PC-3 (cell line): ENCODE measurements at regions of chr1 and their contacts with region 1.

Region 1: GRCh38 chr1:109984456-109985275 is at the start of gene AHCYL1:
- DNase-seq: peak; percentile 99
- ATAC-seq: peak; percentile 86
- H3K4me3 ChIP-seq: peak within 1 kb of the TSS; percentile 84
- H3K27ac ChIP-seq: peak within 1 kb of the TSS; percentile 43
- H3K4me1 ChIP-seq: peaks cover 58% of the 10 kb centered on the region
- H3K27me3 ChIP-seq: no peaks in the 10 kb centered on the region
- CTCF ChIP-seq: peak; percentile 94
- total RNA-seq, gene AHCYL1: 35.8 and 40.9 TPM in 2 replicates

Region 2: GRCh38 chr1:109643385-109644230 is 341.1 kb before region 1 on chr1:
- CTCF ChIA-PET with region 1: interaction called, 12 read pairs
- POLR2A ChIA-PET with region 1: no interaction called
- intact Hi-C with region 1: loop called (anchors 2 kb)
- DNase-seq: peak; percentile 86
- ATAC-seq: peak; percentile 97
- H3K4me3 ChIP-seq: peak overlapping the region; percentile 55; the same call in 1 of the 2 replicates
- H3K27ac ChIP-seq: no peak overlapping the region
- H3K4me1 ChIP-seq: peaks cover 5% of the 10 kb centered on the region; the same call in 1 of the 2 replicates
- H3K27me3 ChIP-seq: no peaks in the 10 kb centered on the region
- CTCF ChIP-seq: peak; percentile 92

Region 3: GRCh38 chr1:109802901-109803561 is 181.6 kb before region 1 on chr1:
- CTCF ChIA-PET with region 1: no interaction called
- POLR2A ChIA-PET with region 1: no interaction called
- intact Hi-C with region 1: no loop called
- DNase-seq: no peak
- ATAC-seq: no peak
- H3K4me3 ChIP-seq: no peak overlapping the region
- H3K27ac ChIP-seq: no peak overlapping the region
- H3K4me1 ChIP-seq: peaks cover 5% of the 10 kb centered on the region
- H3K27me3 ChIP-seq: no peaks in the 10 kb centered on the region
- CTCF ChIP-seq: no peak

Region 4: DNA sequence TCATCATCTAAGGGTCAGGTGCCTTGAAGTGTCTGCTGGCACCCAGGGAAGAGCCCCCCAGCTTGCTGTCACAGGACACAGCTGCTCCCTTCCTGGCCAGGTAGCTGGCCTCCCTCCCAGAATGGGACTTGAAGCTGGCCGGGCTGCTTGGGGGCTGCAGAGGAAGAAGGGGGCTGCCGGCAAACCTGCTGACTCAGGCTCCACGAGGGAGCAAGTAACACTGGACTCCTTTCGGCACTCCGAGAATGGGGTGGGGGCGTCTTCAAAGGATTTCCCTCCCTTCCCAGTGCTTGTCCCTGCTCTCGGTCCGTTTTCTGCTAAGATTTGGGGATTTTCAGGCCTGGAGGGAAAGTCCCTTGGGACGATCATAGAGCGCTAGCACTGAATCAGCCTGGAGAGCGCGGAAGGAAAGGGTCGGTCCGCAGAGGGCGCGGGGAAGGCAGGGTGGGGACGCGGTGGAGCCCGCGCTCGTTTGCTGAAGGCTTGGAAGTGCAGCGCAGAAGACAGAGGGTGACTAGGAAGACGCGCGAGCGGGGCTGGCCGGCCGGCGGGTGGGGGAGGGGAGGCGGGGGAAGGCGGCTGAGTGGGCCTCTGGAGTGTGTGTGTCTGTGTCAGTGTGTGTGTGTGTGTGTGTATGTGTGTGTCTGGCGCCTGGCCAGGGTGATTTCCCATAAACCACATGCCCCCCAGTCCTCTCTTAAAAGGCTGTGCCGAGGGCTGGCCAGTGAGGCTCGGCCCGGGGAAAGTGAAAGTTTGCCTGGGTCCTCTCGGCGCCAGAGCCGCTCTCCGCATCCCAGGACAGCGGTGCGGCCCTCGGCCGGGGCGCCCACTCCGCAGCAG is 74.3 kb before region 1 on chr1 and contains the start of gene CSF1:
- CTCF ChIA-PET with region 1: no interaction called
- POLR2A ChIA-PET with region 1: no interaction called
- intact Hi-C with region 1: loop called (anchors 5 kb)
- DNase-seq: peak; percentile 48
- ATAC-seq: peak; percentile 73
- H3K4me3 ChIP-seq: peak within 1 kb of the TSS; percentile 82
- H3K27ac ChIP-seq: no peak within 1 kb of the TSS
- H3K4me1 ChIP-seq: peaks cover 12% of the 10 kb centered on the region; the same call in 1 of the 2 replicates
- H3K27me3 ChIP-seq: no peaks in the 10 kb centered on the region
- CTCF ChIP-seq: no peak
- total RNA-seq, gene CSF1: 2.0 and 4.1 TPM in 2 replicates

Region 5: DNA sequence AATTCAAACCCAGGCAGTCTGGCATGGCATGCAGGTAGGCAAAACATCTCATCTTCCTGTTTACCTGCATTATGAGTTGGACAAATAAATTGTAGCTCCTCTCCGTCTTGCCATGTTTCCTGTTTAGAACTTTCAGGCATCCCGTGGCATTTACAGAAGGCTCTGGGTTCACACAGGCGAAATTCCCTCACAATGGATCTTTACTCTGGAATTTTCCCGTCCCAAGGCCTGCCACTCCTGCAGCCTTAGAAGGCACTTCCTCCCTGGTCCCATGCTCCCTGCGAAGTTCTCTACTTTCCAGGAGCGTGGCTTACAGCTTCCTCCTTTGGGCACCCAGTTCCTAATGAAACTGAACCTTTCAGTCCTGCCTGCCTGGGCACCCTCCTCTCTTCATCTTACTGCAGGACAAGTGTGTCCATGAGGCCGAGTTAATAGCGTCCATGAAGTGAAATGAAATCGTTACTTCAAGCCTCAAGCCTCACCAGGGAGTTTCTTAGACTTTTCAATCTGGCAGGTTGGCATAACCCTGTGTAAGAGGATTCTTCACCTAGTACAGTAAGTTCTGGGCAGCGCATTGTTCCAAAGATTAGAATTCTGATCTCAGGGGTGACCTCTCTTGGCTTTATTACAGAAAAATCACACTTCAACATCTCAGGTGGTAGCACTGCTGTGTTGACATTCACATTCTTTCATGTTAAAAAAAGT is 36.9 kb before region 1 on chr1:
- CTCF ChIA-PET with region 1: no interaction called
- POLR2A ChIA-PET with region 1: no interaction called
- intact Hi-C with region 1: no loop called
- DNase-seq: no peak
- ATAC-seq: peak; percentile 48
- H3K4me3 ChIP-seq: no peak overlapping the region
- H3K27ac ChIP-seq: no peak overlapping the region
- H3K4me1 ChIP-seq: 0 out of 2 replicates have a peak, but pooled peaks cover 6% of the 10 kb centered on the region
- H3K27me3 ChIP-seq: no peaks in the 10 kb centered on the region
- CTCF ChIP-seq: no peak

Region 6: DNA sequence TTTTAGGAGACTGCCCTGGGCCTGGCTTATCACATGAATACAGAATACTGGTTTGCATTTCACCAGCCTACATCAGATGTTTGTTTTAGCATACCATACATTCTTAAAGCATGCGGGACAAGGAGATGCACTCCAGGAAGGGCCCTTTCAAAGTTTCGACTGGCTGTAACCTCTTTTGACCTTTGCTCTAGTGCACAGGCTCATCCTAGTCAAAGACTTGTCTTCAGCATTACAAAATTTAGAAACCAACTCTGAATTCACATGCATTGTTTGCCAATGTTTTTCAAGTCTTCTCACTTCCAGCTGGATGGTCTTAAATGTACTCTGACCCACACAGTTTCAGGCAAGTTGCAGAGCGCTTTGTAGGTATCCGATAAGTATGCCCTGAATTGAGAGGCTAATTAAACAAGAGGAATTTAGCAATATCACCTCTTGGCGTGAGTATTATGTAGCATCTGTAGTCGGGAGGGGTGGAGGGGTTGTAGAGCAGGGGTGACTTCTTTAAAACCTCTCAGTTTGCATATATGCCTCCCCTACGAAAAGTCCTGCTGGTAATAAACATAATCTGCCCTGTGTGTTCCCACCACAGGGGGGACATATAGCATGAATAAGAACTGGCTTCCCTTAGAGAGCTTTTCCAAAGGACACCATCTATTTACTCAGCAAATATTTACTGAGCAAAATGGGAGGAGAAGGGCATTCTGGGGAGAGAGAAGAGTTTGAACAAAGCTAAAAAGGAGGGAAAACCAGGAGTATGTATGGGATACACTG is 24.5 kb before region 1 on chr1:
- CTCF ChIA-PET with region 1: interaction called, 15 read pairs
- POLR2A ChIA-PET with region 1: no interaction called
- intact Hi-C with region 1: loop called (anchors 2 kb)
- DNase-seq: peak; percentile 85
- ATAC-seq: peak; percentile 97
- H3K4me3 ChIP-seq: peak overlapping the region; percentile 34
- H3K27ac ChIP-seq: peak overlapping the region; percentile 69
- H3K4me1 ChIP-seq: peaks cover 39% of the 10 kb centered on the region
- H3K27me3 ChIP-seq: no peaks in the 10 kb centered on the region
- CTCF ChIP-seq: peak; percentile 52; the same call in 1 of the 2 replicates